ENCODE measurements at regions of chr2 and their contacts with region 1.

Region 1: GRCh38 chr2:69914170-69914960 is 544 bp upstream of the MXD1 start:
- DNase-seq: peak; percentile 100
- ATAC-seq: peak; percentile 93
- H3K4me3 Mint-ChIP-seq: peak overlapping the region; percentile 84
- H3K27ac Mint-ChIP-seq: peak overlapping the region; percentile 87
- H3K4me1 Mint-ChIP-seq: peaks cover 42% of the 10 kb centered on the region
- H3K27me3 Mint-ChIP-seq: no peaks in the 10 kb centered on the region

Region 2: DNA sequence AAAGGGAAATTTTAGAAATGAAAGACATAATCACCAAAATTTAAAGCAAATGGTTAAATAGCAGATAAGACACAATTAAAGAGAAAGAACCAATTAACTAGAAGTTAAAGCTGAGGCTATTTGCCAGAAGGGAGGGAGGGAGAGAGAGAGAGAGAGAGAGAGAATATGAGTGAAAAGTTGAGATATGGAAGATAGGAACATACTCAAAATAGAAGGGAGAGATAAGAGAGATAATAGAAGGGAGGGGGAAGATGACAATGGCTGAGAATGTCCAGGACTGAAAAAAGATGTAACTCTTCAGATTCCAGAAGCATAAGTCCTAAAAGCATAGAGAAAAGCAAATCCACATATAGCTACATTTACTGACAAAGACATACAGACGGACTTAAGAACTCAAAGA is 253.7 kb before region 1 on chr2:
- CTCF ChIA-PET with region 1: no interaction called
- POLR2A ChIA-PET with region 1: no interaction called
- DNase-seq: no peak
- ATAC-seq: no peak
- H3K4me3 Mint-ChIP-seq: no peak overlapping the region
- H3K27ac Mint-ChIP-seq: no peak overlapping the region
- H3K4me1 Mint-ChIP-seq: no peaks in the 10 kb centered on the region
- H3K27me3 Mint-ChIP-seq: no peaks in the 10 kb centered on the region

Region 3: GRCh38 chr2:70043252-70043875 is 129.0 kb after region 1 on chr2:
- CTCF ChIA-PET with region 1: interaction called, 10 read pairs
- POLR2A ChIA-PET with region 1: interaction called, 5 read pairs
- DNase-seq: peak; percentile 79
- ATAC-seq: peak; percentile 77
- H3K4me3 Mint-ChIP-seq: peak overlapping the region; percentile 59
- H3K27ac Mint-ChIP-seq: peak overlapping the region; percentile 86
- H3K4me1 Mint-ChIP-seq: peaks cover 69% of the 10 kb centered on the region
- H3K27me3 Mint-ChIP-seq: no peaks in the 10 kb centered on the region

Region 4: DNA sequence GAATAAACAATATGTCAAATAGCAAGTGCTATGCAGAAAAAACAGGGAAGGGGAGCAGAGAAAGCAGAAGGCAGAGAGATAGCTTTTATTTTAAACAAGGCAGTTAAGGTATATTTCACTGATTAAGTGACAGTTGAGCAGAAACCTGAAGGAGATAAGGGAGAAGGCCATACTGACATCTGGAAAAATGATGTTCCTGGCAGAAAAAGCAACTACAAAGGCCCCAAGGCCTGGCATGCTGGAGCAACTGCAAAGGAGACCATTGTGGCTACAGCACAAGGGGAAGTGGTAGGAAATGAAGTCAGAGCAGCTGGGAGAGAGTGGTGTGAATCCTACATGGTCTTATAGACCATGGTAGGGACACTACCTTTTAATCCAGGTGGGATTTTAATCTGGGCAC is 164.0 kb after region 1 on chr2:
- CTCF ChIA-PET with region 1: interaction called, 16 read pairs
- POLR2A ChIA-PET with region 1: interaction called, 9 read pairs
- DNase-seq: no peak
- ATAC-seq: peak; percentile 50
- H3K4me3 Mint-ChIP-seq: no peak overlapping the region
- H3K27ac Mint-ChIP-seq: peak overlapping the region; percentile 31
- H3K4me1 Mint-ChIP-seq: peaks cover 43% of the 10 kb centered on the region
- H3K27me3 Mint-ChIP-seq: no peaks in the 10 kb centered on the region

Region 5: DNA sequence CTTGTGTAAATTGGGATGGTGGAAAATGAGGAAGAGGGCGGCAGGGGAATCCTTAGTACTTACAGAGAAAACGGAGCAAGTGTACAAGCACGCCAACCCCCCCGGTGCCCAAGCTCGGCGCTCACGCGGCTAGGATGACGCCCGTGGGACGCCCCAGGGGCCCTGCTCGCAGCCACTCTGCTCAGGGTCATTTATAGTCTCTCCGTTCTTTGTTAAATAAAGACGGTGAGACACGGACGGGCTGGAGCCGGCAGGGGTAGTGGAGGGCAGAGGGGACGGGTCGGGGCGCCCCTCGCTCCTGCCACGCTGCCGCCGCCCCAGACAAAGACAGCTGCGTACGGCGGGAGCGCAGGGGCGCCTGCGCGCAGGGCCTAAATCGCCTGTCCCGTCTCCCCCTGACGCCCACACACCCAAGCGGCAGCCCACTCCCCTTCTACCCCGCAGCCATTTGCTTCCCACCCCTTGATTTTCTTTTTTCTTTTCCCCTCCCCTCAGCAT is 210.7 kb after region 1 on chr2:
- CTCF ChIA-PET with region 1: interaction called, 3 read pairs
- POLR2A ChIA-PET with region 1: interaction called, 15 read pairs
- DNase-seq: peak; percentile 69
- ATAC-seq: peak; percentile 70
- H3K4me3 Mint-ChIP-seq: peak overlapping the region; percentile 90
- H3K27ac Mint-ChIP-seq: peak overlapping the region; percentile 99
- H3K4me1 Mint-ChIP-seq: peaks cover 78% of the 10 kb centered on the region
- H3K27me3 Mint-ChIP-seq: no peaks in the 10 kb centered on the region

Region 6: DNA sequence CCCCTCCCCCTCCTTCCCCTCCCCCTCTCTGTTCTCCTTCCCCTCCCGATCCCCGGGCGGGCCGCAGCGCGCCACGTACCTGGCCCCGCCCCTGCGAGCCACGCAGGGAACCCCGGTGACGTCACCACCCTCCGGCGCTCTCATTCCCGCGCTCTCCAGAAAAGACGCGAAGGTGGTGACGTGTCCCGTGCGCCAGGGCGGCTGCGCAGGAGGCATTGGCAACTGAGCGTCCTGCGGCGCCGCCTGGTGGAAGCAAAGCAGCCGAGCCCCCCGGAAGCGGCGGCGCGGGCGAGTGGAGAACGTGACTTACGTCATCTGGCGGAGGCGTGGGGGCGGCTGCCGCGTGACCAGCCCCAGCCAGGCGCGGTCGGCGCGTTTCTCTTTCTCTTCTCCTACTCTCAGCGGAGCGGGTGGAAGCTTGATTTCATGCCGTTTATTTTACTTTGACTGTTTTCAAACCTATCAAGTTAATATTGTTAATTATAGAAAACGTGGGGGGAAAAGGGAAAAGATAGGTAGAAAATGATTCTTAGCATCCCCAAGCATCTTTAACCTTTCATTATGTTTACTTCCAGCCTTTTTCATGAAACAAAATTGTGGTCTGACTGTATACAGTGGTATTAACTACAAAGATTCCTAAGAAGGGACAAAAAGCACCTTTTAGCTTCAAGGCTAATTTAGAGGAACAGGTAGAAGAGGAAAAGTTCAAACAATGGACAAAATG is 228.4 kb after region 1 on chr2:
- CTCF ChIA-PET with region 1: interaction called, 103 read pairs
- POLR2A ChIA-PET with region 1: interaction called, 44 read pairs
- DNase-seq: peak; percentile 100
- ATAC-seq: peak; percentile 74
- H3K4me3 Mint-ChIP-seq: peak overlapping the region; percentile 84
- H3K27ac Mint-ChIP-seq: peak overlapping the region; percentile 96
- H3K4me1 Mint-ChIP-seq: peaks cover 76% of the 10 kb centered on the region
- H3K27me3 Mint-ChIP-seq: no peaks in the 10 kb centered on the region

Region 7: GRCh38 chr2:70301344-70302194 is 387.2 kb after region 1 on chr2 and contains the start of gene FAM136A:
- CTCF ChIA-PET with region 1: interaction called, 52 read pairs
- POLR2A ChIA-PET with region 1: interaction called, 4 read pairs
- DNase-seq: peak; percentile 90
- ATAC-seq: peak; percentile 89
- H3K4me3 Mint-ChIP-seq: peak within 1 kb of the TSS; percentile 94
- H3K27ac Mint-ChIP-seq: peak within 1 kb of the TSS; percentile 98
- H3K4me1 Mint-ChIP-seq: peaks cover 41% of the 10 kb centered on the region
- H3K27me3 Mint-ChIP-seq: no peaks in the 10 kb centered on the region
- total RNA-seq, gene FAM136A: 45.5 to 51.0 TPM